ENCODE measurements at regions of chr1 and their contacts with region 1.

Region 1: GRCh38 chr1:203861379-203862184 is at the start of gene SNRPE:
- DNase-seq: peak; percentile 99
- H3K4me3 ChIP-seq: peak within 1 kb of the TSS; percentile 80
- H3K27ac ChIP-seq: peak within 1 kb of the TSS; percentile 88
- H3K4me1 ChIP-seq: peaks cover 15% of the 10 kb centered on the region
- H3K27me3 ChIP-seq: no peaks in the 10 kb centered on the region
- CTCF ChIP-seq: peak; percentile 89
- total RNA-seq, gene SNRPE: 315 and 358 TPM in 2 replicates

Region 2: GRCh38 chr1:203559523-203559922 is 302.1 kb before region 1 on chr1:
- CTCF ChIA-PET with region 1: no interaction called
- POLR2A ChIA-PET with region 1: no interaction called
- intact Hi-C with region 1: no loop called
- DNase-seq: no peak
- H3K4me3 ChIP-seq: no peak overlapping the region
- H3K27ac ChIP-seq: no peak overlapping the region
- H3K4me1 ChIP-seq: peaks cover 13% of the 10 kb centered on the region
- H3K27me3 ChIP-seq: no peaks in the 10 kb centered on the region
- CTCF ChIP-seq: no peak

Region 3: GRCh38 chr1:203625628-203626019 is 236.0 kb before region 1 on chr1:
- CTCF ChIA-PET with region 1: no interaction called
- POLR2A ChIA-PET with region 1: interaction called, 27 read pairs
- intact Hi-C with region 1: no loop called
- DNase-seq: peak; percentile 73
- H3K4me3 ChIP-seq: peak overlapping the region; percentile 66
- H3K27ac ChIP-seq: peak overlapping the region; percentile 77
- H3K4me1 ChIP-seq: peaks cover 27% of the 10 kb centered on the region
- H3K27me3 ChIP-seq: no peaks in the 10 kb centered on the region
- CTCF ChIP-seq: peak; percentile 45

Region 4: DNA sequence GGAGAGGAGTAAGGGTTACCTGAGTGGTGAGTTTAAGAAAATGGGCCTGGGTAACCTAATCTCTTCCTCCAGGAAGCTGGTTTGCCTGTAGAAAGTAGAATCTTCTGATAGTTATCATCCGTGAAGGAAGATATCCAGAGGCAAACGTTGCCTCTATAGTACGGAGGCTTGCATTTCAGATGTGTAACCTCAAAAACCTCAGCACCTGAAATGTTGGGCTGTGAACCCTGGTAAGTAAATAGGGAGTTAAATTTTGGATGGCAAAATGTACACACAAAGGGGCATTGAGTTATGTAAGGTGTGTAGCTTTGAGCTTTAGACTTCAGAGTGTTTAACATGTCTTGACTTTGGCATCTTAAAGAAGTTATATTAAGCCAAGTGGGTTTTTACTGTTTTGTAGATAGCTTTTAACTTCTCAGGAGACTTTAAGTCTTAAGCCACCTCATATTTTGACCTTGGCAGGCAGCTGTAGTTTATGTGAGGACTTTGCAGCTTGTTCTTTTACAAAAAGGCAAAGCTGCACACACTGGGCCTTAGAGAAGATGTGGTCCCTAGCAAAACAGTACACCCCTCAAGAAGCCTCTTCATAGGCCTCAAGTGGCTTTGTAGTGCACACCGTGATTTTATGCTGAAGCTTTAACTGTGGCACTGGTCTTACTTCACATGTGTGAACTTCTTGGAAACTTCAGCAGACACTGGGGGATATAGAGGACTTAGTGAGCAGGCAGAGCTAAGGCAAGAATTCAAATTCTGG is 83.2 kb after region 1 on chr1:
- CTCF ChIA-PET with region 1: no interaction called
- POLR2A ChIA-PET with region 1: interaction called, 11 read pairs
- intact Hi-C with region 1: no loop called
- DNase-seq: no peak
- H3K4me3 ChIP-seq: no peak overlapping the region
- H3K27ac ChIP-seq: no peak overlapping the region
- H3K4me1 ChIP-seq: no peaks in the 10 kb centered on the region
- H3K27me3 ChIP-seq: no peaks in the 10 kb centered on the region
- CTCF ChIP-seq: no peak

Region 5: GRCh38 chr1:204162231-204163074 is 300.9 kb after region 1 on chr1:
- CTCF ChIA-PET with region 1: no interaction called
- POLR2A ChIA-PET with region 1: no interaction called
- intact Hi-C with region 1: loop called (anchors 1 kb)
- DNase-seq: peak; percentile 85
- H3K4me3 ChIP-seq: no peak overlapping the region
- H3K27ac ChIP-seq: no peak overlapping the region
- H3K4me1 ChIP-seq: peaks cover 3% of the 10 kb centered on the region
- H3K27me3 ChIP-seq: no peaks in the 10 kb centered on the region
- CTCF ChIP-seq: peak; percentile 99

Region 6: GRCh38 chr1:204363335-204364124 is 501.9 kb after region 1 on chr1:
- CTCF ChIA-PET with region 1: no interaction called
- POLR2A ChIA-PET with region 1: no interaction called
- intact Hi-C with region 1: loop called (anchors 5 kb)
- DNase-seq: peak; percentile 83
- H3K4me3 ChIP-seq: peak overlapping the region; percentile 38
- H3K27ac ChIP-seq: no peak overlapping the region
- H3K4me1 ChIP-seq: peaks cover 7% of the 10 kb centered on the region
- H3K27me3 ChIP-seq: no peaks in the 10 kb centered on the region
- CTCF ChIP-seq: peak; percentile 98

Region 7: DNA sequence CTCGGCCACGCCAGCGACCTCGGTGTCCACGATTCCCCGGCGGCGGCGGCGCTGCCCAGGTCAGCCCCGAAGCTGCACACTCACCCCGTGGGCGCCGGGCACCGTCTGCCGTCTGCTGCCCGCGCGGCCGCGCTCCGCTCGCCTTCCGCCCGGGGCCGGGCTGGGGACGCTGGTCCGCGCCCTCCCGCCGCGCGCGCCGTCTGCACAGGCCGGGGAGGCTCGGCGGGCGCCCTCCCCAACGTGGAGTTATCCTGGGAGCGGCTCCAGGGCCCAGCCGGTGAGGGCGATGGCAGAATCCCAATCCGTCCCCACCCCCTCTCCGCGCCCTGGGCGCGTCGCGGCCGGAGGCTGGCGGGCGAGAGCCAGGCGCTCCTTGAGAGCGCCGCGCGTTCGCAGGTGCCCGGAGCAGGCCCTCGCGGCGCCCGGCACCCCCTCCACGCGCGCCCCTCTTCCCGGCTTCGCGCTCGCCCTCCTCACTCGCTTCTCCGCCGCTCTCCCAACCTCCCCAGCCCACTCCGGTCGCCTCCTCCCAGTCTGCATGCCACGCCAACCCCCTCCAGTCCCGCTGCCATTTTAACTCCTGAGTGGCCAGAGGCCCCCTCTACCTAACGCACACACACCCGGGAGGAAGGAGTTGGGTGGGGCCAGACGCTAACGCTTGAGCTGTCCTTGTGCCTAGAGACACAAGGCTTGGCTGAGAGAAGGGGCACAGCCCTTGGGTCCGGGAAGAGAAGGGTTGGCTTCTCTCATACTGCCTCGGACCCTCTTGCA is 823.8 kb after region 1 on chr1 and contains the start of gene LRRN2:
- CTCF ChIA-PET with region 1: no interaction called
- POLR2A ChIA-PET with region 1: no interaction called
- intact Hi-C with region 1: no loop called
- DNase-seq: no peak
- H3K4me3 ChIP-seq: peak within 1 kb of the TSS; percentile 21
- H3K27ac ChIP-seq: no peak within 1 kb of the TSS
- H3K4me1 ChIP-seq: no peaks in the 10 kb centered on the region
- H3K27me3 ChIP-seq: peaks cover 56% of the 10 kb centered on the region
- CTCF ChIP-seq: no peak
- total RNA-seq, gene LRRN2: not detected in 2 replicates